ENCODE measurements at regions of chr17 and their contacts with region 1.

Region 1: GRCh38 chr17:14300575-14301278 is at the start of gene HS3ST3B1:
- DNase-seq: peak; percentile 97 to 98
- ATAC-seq: peak; percentile 86
- H3K4me3 ChIP-seq: peak within 1 kb of the TSS; percentile 1 to 6
- H3K27ac ChIP-seq: no peak within 1 kb of the TSS
- H3K4me1 ChIP-seq: no peaks in the 10 kb centered on the region
- H3K27me3 ChIP-seq: no peaks in the 10 kb centered on the region
- total RNA-seq, gene HS3ST3B1: 0.63 to 1.3 TPM

Region 2: DNA sequence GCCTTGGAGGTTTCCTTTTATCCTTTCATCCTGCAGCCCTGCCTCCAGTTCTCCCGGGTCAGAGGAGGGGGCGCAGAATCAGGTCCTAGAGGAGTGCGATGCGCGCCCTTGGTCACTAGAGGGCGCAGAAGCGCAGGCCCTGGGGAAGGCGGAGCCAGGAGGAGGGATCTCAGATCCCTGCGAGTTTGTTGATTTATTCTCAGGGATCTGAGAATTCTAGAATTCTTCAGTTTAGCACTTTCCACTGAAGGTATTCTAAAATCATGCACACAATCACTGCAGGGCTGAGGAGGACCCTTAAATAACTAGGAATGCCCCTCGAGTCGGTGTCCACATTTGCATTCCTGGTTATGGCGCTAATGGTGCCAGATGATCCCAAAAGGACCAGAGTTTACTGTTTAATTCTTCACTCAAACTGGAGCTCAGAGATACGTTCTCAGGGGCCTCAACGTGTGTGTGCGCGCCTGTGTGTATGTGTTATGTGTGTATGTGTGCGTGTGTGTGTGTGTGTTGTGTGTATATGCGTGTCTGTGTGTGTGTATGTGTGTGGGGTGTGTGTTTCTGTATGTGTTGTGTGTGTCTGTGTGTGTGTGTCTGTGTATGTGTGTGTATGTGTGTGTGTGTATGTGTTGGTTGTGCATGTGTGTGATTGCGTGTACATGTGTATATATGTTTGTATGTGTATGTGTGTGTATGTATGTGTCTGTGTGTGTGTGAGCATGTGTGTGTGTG is 1276.0 kb before region 1 on chr17:
- intact Hi-C with region 1: loop called in 1 of 2 experiments (anchors 10 kb)
- DNase-seq: peak; percentile 65 to 87
- ATAC-seq: peak; percentile 90
- H3K4me3 ChIP-seq: no peak overlapping the region
- H3K27ac ChIP-seq: no peak overlapping the region
- H3K4me1 ChIP-seq: no peaks in the 10 kb centered on the region
- H3K27me3 ChIP-seq: no peaks in the 10 kb centered on the region

Region 3: GRCh38 chr17:13337864-13338371 is 962.8 kb before region 1 on chr17:
- intact Hi-C with region 1: loop called in 1 of 2 experiments (anchors 10 kb)
- DNase-seq: no peak
- ATAC-seq: no peak
- H3K4me3 ChIP-seq: no peak overlapping the region
- H3K27ac ChIP-seq: no peak overlapping the region
- H3K4me1 ChIP-seq: no peaks in the 10 kb centered on the region
- H3K27me3 ChIP-seq: peaks cover 0 to 6% of the 10 kb centered on the region in 2 donors

Region 4: GRCh38 chr17:13594762-13595598 is 705.7 kb before region 1 on chr17:
- intact Hi-C with region 1: loop called (anchors 2 to 5 kb)
- DNase-seq: peak in 1 of 2 donors; percentile 70
- ATAC-seq: peak; percentile 80
- H3K4me3 ChIP-seq: no peak overlapping the region
- H3K27ac ChIP-seq: no peak overlapping the region
- H3K4me1 ChIP-seq: no peaks in the 10 kb centered on the region
- H3K27me3 ChIP-seq: peaks cover 0 to 3% of the 10 kb centered on the region in 2 donors

Region 5: GRCh38 chr17:13792314-13792713 is 508.4 kb before region 1 on chr17:
- intact Hi-C with region 1: loop called in 1 of 2 experiments (anchors 10 kb)
- DNase-seq: no peak
- ATAC-seq: no peak
- H3K4me3 ChIP-seq: no peak overlapping the region
- H3K27ac ChIP-seq: no peak overlapping the region
- H3K4me1 ChIP-seq: no peaks in the 10 kb centered on the region
- H3K27me3 ChIP-seq: no peaks in the 10 kb centered on the region

Region 6: DNA sequence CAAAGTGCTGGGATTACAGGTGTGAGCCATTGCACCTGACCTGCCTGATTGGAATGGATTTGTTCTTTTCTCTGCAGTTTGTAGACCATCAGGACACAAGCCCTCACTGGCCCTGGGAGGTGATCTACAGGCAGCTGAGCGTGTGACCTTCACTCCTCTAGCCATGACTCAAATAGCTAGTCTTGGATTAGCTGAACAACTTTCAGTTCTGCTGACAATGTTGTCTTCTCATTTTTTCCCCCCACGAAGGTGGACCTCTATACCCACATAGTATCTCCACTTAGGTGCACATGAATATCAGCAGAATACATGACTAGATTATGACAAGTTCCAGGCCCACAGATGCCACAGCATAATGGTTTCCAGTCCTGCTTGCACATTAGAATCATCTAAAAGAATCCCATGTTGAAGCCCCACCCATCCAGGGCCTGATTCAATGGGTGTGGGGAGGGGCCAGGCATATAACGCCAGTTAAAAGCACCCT is 36.9 kb after region 1 on chr17:
- intact Hi-C with region 1: no loop called
- DNase-seq: no peak
- ATAC-seq: no peak
- H3K4me3 ChIP-seq: no peak overlapping the region
- H3K27ac ChIP-seq: no peak overlapping the region
- H3K4me1 ChIP-seq: no peaks in the 10 kb centered on the region
- H3K27me3 ChIP-seq: peaks cover 0 to 2% of the 10 kb centered on the region in 2 donors